ENCODE measurements at regions of chr1 and their contacts with region 1.

Region 1: DNA sequence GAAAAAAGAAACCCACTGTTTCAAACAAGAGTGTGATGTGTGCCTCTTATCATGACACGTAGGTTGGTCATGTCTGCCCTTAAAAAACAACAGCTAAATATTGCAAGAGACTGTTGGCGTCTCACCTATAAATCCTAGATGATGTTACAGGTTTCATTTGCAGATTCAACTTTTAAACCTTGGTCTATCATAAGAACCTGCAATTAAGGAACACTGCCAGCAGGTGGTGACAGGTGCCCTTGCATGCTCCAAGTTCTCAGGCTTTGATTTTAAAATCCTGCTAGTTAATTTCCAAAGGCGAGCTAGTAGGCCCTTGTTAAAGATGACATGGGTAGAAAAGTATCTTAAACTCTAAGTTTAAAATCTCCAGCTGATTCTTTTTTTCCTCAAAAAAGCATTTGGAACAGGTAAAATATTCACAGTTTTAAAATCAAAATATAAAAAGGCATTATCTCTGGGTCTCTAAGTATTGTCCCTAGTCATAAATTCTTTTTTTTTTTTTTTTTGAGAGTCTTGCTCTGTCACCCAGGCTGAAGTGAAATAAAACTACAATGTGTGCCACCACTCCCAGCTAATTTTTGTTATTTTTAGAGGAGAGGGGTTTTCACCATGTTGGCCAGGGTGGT is 39.1 kb downstream of the CLSTN1 start:
- DNase-seq: peak; percentile 85
- H3K4me3 Mint-ChIP-seq: no peak overlapping the region
- H3K27ac Mint-ChIP-seq: no peak overlapping the region
- H3K4me1 Mint-ChIP-seq: peaks cover 34% of the 10 kb centered on the region
- H3K27me3 Mint-ChIP-seq: no peaks in the 10 kb centered on the region

Region 2: DNA sequence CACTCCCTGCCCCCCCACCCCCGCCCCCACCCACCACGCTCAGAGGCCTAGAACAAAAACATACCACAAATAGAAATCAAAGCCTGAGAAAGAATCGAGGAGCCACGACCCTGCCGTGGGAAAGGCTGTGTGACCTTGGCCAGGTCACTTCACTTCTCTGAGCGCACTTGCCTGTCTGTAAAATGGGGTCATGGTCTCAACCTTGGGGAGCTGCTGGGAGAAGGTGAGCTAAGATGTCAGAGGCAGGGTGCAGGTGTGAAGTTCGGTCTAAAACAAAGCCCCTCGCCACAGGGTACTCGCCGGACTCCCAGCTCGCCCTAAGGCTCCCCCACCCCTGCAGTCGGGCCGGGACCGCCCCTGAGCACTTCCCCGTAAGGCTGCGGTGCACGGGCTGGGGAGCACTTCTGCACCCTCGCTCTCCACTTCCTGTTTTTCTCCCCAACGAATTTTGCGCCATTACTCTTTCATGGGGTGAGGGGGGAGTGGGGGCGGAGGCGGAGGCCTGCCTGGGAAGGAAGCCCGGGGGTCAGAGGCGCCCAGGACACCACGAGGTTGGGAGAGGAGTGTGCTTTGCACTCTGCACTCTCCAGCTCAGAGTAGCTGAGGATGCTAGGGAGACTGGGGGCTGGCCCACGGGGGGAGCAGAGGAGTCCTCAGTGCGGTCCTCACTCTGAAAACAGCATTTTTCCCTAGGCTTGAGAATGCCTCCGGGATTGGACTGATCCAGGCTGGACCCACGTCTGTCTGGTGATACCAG is 155.0 kb before region 1 on chr1:
- CTCF ChIA-PET with region 1: interaction called, 6 read pairs
- intact Hi-C with region 1: loop called (anchors 1 kb)
- DNase-seq: peak; percentile 87
- H3K4me3 Mint-ChIP-seq: peak overlapping the region; percentile 85
- H3K27ac Mint-ChIP-seq: peak overlapping the region; percentile 93
- H3K4me1 Mint-ChIP-seq: peaks cover 67% of the 10 kb centered on the region
- H3K27me3 Mint-ChIP-seq: no peaks in the 10 kb centered on the region

Region 3: DNA sequence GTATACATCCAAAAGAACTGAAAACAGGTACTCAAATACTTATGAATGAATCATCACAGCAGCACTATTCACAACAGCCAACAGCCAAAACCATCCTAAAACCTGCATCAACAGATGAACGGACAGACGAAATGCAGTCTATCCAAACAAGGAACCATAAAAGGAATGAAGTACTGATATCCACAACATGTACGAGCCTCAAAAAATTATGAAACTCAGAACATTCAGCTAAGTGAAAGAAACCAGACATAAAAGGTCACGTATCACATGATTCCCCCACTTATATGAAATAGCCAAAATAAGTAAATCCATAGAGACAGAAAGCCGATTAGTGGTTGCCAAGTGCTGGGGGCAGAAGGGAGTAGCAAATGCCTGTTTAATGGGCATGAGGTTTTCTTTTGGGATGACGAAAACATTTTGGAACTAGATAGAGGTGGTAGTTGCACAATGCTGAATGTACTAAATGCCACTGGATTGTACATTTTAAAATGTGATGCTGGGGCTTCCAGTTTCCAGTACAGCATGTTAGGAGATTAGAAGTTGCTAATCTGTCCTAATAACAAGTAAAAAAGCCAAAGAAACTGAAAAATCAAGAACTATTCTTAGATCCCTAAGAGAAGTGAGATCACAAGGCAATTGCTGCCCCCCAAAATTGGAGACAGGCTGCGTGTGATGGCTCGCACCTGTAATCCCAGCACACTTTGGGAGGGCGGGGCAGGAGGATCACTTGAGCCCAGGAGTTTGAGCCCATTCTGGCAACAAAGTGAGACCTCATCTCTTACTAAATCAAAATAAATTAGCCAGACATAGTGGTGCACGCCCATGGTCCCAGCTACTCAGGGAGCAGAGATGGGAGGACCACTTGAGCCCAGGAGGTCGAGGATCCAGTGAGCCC is 13.9 kb after region 1 on chr1:
- CTCF ChIA-PET with region 1: interaction called, 24 read pairs
- intact Hi-C with region 1: loop called (anchors 1 kb)
- DNase-seq: no peak
- H3K4me3 Mint-ChIP-seq: no peak overlapping the region
- H3K27ac Mint-ChIP-seq: no peak overlapping the region
- H3K4me1 Mint-ChIP-seq: peaks cover 56% of the 10 kb centered on the region
- H3K27me3 Mint-ChIP-seq: no peaks in the 10 kb centered on the region

Region 4: DNA sequence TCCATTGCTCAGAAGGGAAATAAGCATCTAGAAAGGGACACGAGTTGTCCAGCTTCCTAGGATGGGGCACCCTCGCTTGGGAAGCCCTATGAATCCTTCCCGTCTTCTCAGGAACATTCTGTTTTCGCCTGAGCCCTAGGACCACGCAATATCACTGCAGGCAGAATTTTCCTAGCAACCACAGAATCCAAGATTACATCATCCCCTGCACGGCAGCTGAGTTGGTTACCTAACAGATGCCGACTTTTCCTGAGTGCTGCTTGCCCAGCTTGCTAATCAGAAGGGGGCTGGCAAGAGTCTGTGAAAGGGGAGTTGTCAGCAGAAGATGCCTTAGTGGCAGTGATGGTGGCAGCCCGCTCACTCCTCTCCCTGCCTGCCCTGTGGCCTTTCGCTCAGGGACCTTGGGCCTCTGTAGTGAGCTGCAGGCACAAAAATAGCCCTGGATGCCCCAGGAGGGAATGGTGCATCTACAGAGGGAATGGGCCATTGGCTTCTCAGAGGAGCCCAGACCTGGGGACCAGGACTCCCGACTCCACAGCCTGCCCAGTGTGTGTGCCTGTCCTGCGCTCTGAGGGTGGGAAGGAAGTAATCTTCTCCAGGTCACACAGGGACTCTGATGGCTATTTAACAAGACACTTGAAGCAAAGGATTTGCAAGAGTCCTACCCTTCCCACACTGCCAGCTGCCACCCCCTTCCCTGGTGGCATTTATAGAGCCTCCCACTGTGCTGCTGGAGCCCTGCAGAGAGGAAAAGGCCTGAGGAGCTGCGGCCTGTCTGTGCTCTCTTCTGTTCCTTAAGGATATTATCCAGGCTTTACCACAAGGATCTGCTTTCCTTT is 68.0 kb after region 1 on chr1:
- CTCF ChIA-PET with region 1: interaction called, 18 read pairs
- intact Hi-C with region 1: no loop called
- DNase-seq: no peak
- H3K4me3 Mint-ChIP-seq: no peak overlapping the region
- H3K27ac Mint-ChIP-seq: no peak overlapping the region
- H3K4me1 Mint-ChIP-seq: peaks cover 9% of the 10 kb centered on the region
- H3K27me3 Mint-ChIP-seq: no peaks in the 10 kb centered on the region

Region 5: GRCh38 chr1:9867408-9868243 is 83.0 kb after region 1 on chr1:
- CTCF ChIA-PET with region 1: interaction called, 178 read pairs
- intact Hi-C with region 1: loop called (anchors 1 kb)
- DNase-seq: peak; percentile 95
- H3K4me3 Mint-ChIP-seq: no peak overlapping the region
- H3K27ac Mint-ChIP-seq: no peak overlapping the region
- H3K4me1 Mint-ChIP-seq: no peaks in the 10 kb centered on the region
- H3K27me3 Mint-ChIP-seq: no peaks in the 10 kb centered on the region

Region 6: GRCh38 chr1:9910425-9911178 is 126.0 kb after region 1 on chr1:
- CTCF ChIA-PET with region 1: interaction called, 5 read pairs
- intact Hi-C with region 1: loop called (anchors 2 kb)
- DNase-seq: peak; percentile 100
- H3K4me3 Mint-ChIP-seq: peak overlapping the region; percentile 95
- H3K27ac Mint-ChIP-seq: peak overlapping the region; percentile 93
- H3K4me1 Mint-ChIP-seq: peaks cover 20% of the 10 kb centered on the region
- H3K27me3 Mint-ChIP-seq: no peaks in the 10 kb centered on the region

Region 7: DNA sequence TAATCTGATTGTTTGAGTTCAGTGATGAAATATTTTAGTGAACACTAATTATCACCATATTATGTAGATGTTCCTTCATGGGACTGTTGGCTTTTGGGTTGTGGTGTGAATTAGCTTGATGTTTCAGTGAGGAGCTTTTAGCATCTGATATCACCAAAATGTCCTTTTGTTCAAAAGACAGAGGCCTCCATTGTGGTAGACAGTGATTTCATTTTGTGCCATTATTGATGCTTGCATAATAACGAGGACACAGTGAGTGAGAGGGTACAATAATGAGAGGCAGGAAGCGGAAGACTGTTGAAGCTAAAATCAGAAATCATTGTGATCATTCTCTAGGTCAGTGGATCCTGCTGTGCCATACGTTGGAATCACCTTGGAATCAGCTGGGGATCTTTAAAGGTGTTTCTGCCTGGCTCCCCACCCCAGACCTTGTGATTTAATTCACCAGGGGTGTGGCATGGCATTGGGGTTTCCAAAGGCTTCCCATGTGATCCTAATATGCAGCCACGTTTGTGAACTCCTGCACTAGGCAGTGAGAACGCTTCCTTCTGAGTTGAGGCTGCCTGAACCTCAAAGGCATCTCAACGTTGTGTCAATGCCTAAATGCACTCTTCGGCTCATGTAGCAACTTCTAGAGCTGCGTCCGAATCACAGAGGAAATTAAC is 343.6 kb after region 1 on chr1:
- CTCF ChIA-PET with region 1: no interaction called
- intact Hi-C with region 1: no loop called
- DNase-seq: no peak
- H3K4me3 Mint-ChIP-seq: no peak overlapping the region
- H3K27ac Mint-ChIP-seq: no peak overlapping the region
- H3K4me1 Mint-ChIP-seq: no peaks in the 10 kb centered on the region
- H3K27me3 Mint-ChIP-seq: no peaks in the 10 kb centered on the region

Measured in activated naive CD4-positive, alpha-beta T cell treated with anti-CD3 and anti-CD28 coated beads for 36 hours (primary cell).